ENCODE measurements at regions of chr3 and their contacts with region 1.

Region 1: GRCh38 chr3:146589899-146590508 is 15.1 kb downstream of the PLSCR5 start:
- DNase-seq: peak in 1 of 2 donors; percentile 80
- H3K4me3 ChIP-seq: no peak overlapping the region
- H3K27ac ChIP-seq: no peak overlapping the region
- H3K4me1 ChIP-seq: no peaks in the 10 kb centered on the region
- H3K27me3 ChIP-seq: no peaks in the 10 kb centered on the region
- CTCF ChIP-seq: peak in 5 of 7 experiments; percentile 16 to 51 (median 42)
- EP300 ChIP-seq: no peak
- POLR2A ChIP-seq: no peak

Region 2: GRCh38 chr3:146646261-146646660 is 56.3 kb after region 1 on chr3:
- intact Hi-C with region 1: loop called (anchors 5 kb)
- DNase-seq: no peak
- H3K4me3 ChIP-seq: no peak overlapping the region
- H3K27ac ChIP-seq: no peak overlapping the region
- H3K4me1 ChIP-seq: no peaks in the 10 kb centered on the region
- H3K27me3 ChIP-seq: no peaks in the 10 kb centered on the region
- CTCF ChIP-seq: no peak
- EP300 ChIP-seq: no peak
- POLR2A ChIP-seq: no peak

Region 3: GRCh38 chr3:146834917-146835316 is 244.9 kb after region 1 on chr3:
- intact Hi-C with region 1: no loop called
- DNase-seq: no peak
- H3K4me3 ChIP-seq: no peak overlapping the region
- H3K27ac ChIP-seq: no peak overlapping the region
- H3K4me1 ChIP-seq: no peaks in the 10 kb centered on the region
- H3K27me3 ChIP-seq: no peaks in the 10 kb centered on the region
- CTCF ChIP-seq: no peak
- EP300 ChIP-seq: no peak
- POLR2A ChIP-seq: no peak

Measured in stomach (tissue), 19 donors.